Breast epithelium (tissue), 4 donors: ENCODE measurements at regions of chr3 and their contacts with region 1.

Region 1: DNA sequence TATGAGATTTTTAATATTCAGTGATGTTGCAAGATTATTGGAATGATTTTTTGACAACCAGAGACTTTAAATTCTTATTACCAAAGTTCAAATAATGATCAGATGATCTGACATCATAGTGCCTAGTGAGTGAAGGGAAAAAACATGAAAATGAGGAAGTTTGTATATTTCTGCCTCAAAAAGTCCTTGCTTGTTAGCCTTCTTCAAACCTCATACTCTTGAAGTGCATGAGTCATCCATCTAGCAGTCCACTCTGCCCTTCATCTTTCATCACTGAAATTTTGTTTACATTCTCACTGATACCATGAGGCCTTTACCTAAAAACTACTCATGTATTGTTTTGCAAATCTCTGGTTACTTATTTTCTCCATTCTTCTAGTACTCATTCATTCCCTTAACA is 23.9 kb upstream of the OR5H6 start:
- DNase-seq: no peak
- H3K4me3 ChIP-seq: no peak overlapping the region
- H3K27ac ChIP-seq: no peak overlapping the region
- H3K4me1 ChIP-seq: no peaks in the 10 kb centered on the region
- H3K27me3 ChIP-seq: no peaks in the 10 kb centered on the region
- CTCF ChIP-seq: no peak
- POLR2A ChIP-seq: no peak

Region 2: GRCh38 chr3:98199020-98199419 is 41.1 kb before region 1 on chr3:
- intact Hi-C with region 1: loop called (anchors 2 kb)
- DNase-seq: no peak
- H3K4me3 ChIP-seq: no peak overlapping the region
- H3K27ac ChIP-seq: no peak overlapping the region
- H3K4me1 ChIP-seq: no peaks in the 10 kb centered on the region
- H3K27me3 ChIP-seq: no peaks in the 10 kb centered on the region
- CTCF ChIP-seq: no peak
- POLR2A ChIP-seq: no peak